ENCODE measurements at regions of chr13 and their contacts with region 1.

Region 1: GRCh38 chr13:19863323-19864023 is at the start of gene ZMYM5:
- DNase-seq: peak; percentile 98 to 99
- H3K4me3 ChIP-seq: peak within 1 kb of the TSS; percentile 73 to 99
- H3K27ac ChIP-seq: peak within 1 kb of the TSS; percentile 97 to 99
- H3K4me1 ChIP-seq: peaks cover 6 to 7% of the 10 kb centered on the region in 2 donors
- H3K27me3 ChIP-seq: no peaks in the 10 kb centered on the region
- CTCF ChIP-seq: peak in 2 of 4 experiments; percentile 24 to 28
- POLR2A ChIP-seq: peak; percentile 90 to 95
- total RNA-seq, gene ZMYM5: 6.7 to 39.5 (median 25.4) TPM

Region 2: GRCh38 chr13:19782049-19782726 is 81.3 kb before region 1 on chr13:
- intact Hi-C with region 1: loop called (anchors 10 kb)
- DNase-seq: peak; percentile 41 to 47
- H3K4me3 ChIP-seq: peak overlapping the region; percentile 58 to 80
- H3K27ac ChIP-seq: peak overlapping the region; percentile 88
- H3K4me1 ChIP-seq: no peaks in the 10 kb centered on the region
- H3K27me3 ChIP-seq: no peaks in the 10 kb centered on the region
- CTCF ChIP-seq: no peak
- POLR2A ChIP-seq: no peak

Measured in uterus (tissue), 4 donors.